CD4-positive, alpha-beta T cell (primary cell): ENCODE measurements at regions of chr18 and their contacts with region 1.

Region 1: GRCh38 chr18:3593904-3594661 is 144.1 kb downstream of the TGIF1 start:
- DNase-seq: peak; percentile 79 to 97 (median 88)
- ATAC-seq: peak; percentile 74
- H3K4me3 ChIP-seq: peak overlapping the region; percentile 59
- H3K4me3 Mint-ChIP-seq: peak overlapping the region; percentile 94
- H3K27ac ChIP-seq: peak overlapping the region; percentile 89 to 98
- H3K27ac Mint-ChIP-seq: peak overlapping the region; percentile 100
- H3K4me1 ChIP-seq: peaks cover 62% of the 10 kb centered on the region
- H3K4me1 Mint-ChIP-seq: peaks cover 59% of the 10 kb centered on the region
- H3K27me3 ChIP-seq: no peaks in the 10 kb centered on the region
- H3K27me3 Mint-ChIP-seq: no peaks in the 10 kb centered on the region
- CTCF ChIP-seq: peak; percentile 82

Region 2: GRCh38 chr18:3261371-3262246 is 332.5 kb before region 1 on chr18 and contains the start of gene MYL12B:
- CTCF ChIA-PET with region 1: interaction called, 6 read pairs
- POLR2A ChIA-PET with region 1: interaction called, 32 read pairs
- intact Hi-C with region 1: no loop called
- DNase-seq: peak; percentile 63 to 92 (median 75)
- ATAC-seq: peak; percentile 71
- H3K4me3 ChIP-seq: peak within 1 kb of the TSS; percentile 68
- H3K4me3 Mint-ChIP-seq: peak within 1 kb of the TSS; percentile 100
- H3K27ac ChIP-seq: peak within 1 kb of the TSS; percentile 95 to 98
- H3K27ac Mint-ChIP-seq: peak within 1 kb of the TSS; percentile 100
- H3K4me1 ChIP-seq: peaks cover 43% of the 10 kb centered on the region
- H3K4me1 Mint-ChIP-seq: peaks cover 85% of the 10 kb centered on the region
- H3K27me3 ChIP-seq: no peaks in the 10 kb centered on the region
- H3K27me3 Mint-ChIP-seq: no peaks in the 10 kb centered on the region
- CTCF ChIP-seq: no peak
- total RNA-seq, gene MYL12B: 128 to 133 TPM

Region 3: DNA sequence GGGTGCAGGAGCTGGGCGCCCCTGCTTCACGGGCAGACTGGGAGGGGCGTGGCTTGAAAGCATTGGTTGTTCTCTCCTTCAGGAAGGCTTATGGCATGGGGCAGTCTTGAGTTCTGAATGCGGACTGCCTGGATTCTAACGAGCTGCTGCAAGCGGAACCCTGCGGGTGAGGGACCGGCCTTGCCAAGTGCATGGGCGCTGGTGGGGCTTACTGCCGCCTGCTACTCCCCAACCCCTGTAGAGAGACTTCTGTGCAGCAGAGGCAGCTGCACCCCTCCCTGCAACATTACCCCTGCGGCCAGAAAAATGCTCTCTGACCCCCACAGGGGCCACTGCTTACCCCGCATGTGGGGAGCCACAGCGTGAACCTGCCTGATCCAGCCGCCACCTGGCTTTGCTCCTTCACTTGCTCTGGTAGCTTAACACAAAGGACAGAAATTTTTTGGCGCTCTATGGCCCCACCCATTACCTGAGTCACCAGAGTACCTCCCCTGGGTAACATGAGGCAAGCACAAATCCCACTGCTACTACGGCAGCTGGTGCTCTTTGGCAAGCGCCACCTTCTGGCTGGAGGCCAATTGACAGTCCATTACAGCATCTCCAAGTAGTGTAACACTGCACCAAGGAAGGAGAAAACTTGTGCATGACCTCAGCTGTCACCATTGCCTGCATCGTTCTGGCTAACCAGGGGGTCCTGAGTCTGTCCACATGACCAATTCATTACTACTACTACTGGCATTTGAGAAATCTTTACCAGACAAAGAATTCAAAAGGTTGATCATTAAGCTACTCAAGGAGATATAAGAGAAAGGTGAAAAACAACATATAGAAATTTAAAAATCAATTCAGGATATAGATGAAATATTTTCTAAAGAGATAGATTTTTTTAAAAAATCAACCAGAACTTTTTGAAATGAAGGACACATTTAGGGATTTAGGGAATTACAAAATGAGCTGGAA is 296.8 kb before region 1 on chr18:
- CTCF ChIA-PET with region 1: interaction called, 30 read pairs
- POLR2A ChIA-PET with region 1: interaction called, 35 read pairs
- intact Hi-C with region 1: loop called (anchors 1 to 2 kb)
- DNase-seq: peak; percentile 88 to 96 (median 92)
- ATAC-seq: peak; percentile 96
- H3K4me3 ChIP-seq: peak overlapping the region; percentile 65
- H3K4me3 Mint-ChIP-seq: peak overlapping the region; percentile 91
- H3K27ac ChIP-seq: no peak overlapping the region
- H3K27ac Mint-ChIP-seq: peak overlapping the region; percentile 79
- H3K4me1 ChIP-seq: peaks cover 11% of the 10 kb centered on the region
- H3K4me1 Mint-ChIP-seq: peaks cover 11% of the 10 kb centered on the region
- H3K27me3 ChIP-seq: peaks cover 0 to 15% of the 10 kb centered on the region in 2 experiments
- H3K27me3 Mint-ChIP-seq: peaks cover 35% of the 10 kb centered on the region
- CTCF ChIP-seq: peak; percentile 80

Region 4: GRCh38 chr18:3360211-3360610 is 233.9 kb before region 1 on chr18:
- CTCF ChIA-PET with region 1: no interaction called
- POLR2A ChIA-PET with region 1: no interaction called
- intact Hi-C with region 1: no loop called
- DNase-seq: no peak
- ATAC-seq: no peak
- H3K4me3 ChIP-seq: no peak overlapping the region
- H3K4me3 Mint-ChIP-seq: no peak overlapping the region
- H3K27ac ChIP-seq: no peak overlapping the region
- H3K27ac Mint-ChIP-seq: no peak overlapping the region
- H3K4me1 ChIP-seq: no peaks in the 10 kb centered on the region
- H3K4me1 Mint-ChIP-seq: peaks cover 10% of the 10 kb centered on the region
- H3K27me3 ChIP-seq: no peaks in the 10 kb centered on the region
- H3K27me3 Mint-ChIP-seq: no peaks in the 10 kb centered on the region
- CTCF ChIP-seq: no peak

Region 5: GRCh38 chr18:3454365-3455089 is 139.6 kb before region 1 on chr18:
- CTCF ChIA-PET with region 1: interaction called, 51 read pairs
- POLR2A ChIA-PET with region 1: interaction called, 140 read pairs
- intact Hi-C with region 1: loop called (anchors 1 to 2 kb)
- DNase-seq: peak in 7 of 14 experiments; percentile 13 to 78 (median 58)
- ATAC-seq: no peak
- H3K4me3 ChIP-seq: peak overlapping the region; percentile 90
- H3K4me3 Mint-ChIP-seq: peak overlapping the region; percentile 98
- H3K27ac ChIP-seq: peak overlapping the region; percentile 75 to 98
- H3K27ac Mint-ChIP-seq: peak overlapping the region; percentile 99
- H3K4me1 ChIP-seq: peaks cover 50% of the 10 kb centered on the region
- H3K4me1 Mint-ChIP-seq: peaks cover 73% of the 10 kb centered on the region
- H3K27me3 ChIP-seq: no peaks in the 10 kb centered on the region
- H3K27me3 Mint-ChIP-seq: no peaks in the 10 kb centered on the region
- CTCF ChIP-seq: peak; percentile 91

Region 6: DNA sequence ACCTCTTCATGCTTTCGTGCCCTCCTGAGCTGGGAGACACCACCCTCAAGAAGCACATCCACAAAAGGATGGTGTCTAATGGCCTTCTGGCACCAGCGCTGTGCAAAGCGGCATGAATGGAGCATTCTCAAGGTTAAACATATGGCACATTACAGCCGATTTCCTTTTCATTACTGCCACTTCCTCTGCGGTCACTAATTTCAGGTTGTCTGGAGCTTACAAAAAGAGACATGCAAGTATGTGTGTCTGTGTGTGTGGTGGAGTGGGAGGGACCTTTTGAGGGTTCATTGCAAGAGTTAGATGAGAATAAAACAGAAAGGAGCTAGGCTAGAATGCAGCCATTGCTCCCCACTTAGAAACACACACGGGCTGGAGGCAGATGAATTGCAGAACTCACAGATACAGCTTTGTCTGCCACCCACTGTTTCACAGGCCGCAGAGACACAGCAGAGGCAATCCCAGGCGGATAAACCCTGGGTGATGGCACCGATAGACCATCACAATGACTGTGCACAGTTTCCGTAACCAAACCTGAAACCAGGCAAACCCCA is 68.1 kb before region 1 on chr18:
- CTCF ChIA-PET with region 1: interaction called, 6 read pairs
- POLR2A ChIA-PET with region 1: interaction called, 12 read pairs
- intact Hi-C with region 1: loop called in 1 of 2 experiments (anchors 10 kb)
- DNase-seq: peak in 9 of 14 experiments; percentile 0 to 76 (median 18)
- ATAC-seq: peak; percentile 74
- H3K4me3 ChIP-seq: peak overlapping the region; percentile 34
- H3K4me3 Mint-ChIP-seq: peak overlapping the region; percentile 17
- H3K27ac ChIP-seq: no peak overlapping the region
- H3K27ac Mint-ChIP-seq: peak overlapping the region; percentile 35
- H3K4me1 ChIP-seq: peaks cover 14% of the 10 kb centered on the region
- H3K4me1 Mint-ChIP-seq: peaks cover 15% of the 10 kb centered on the region
- H3K27me3 ChIP-seq: no peaks in the 10 kb centered on the region
- H3K27me3 Mint-ChIP-seq: no peaks in the 10 kb centered on the region
- CTCF ChIP-seq: no peak

Region 7: DNA sequence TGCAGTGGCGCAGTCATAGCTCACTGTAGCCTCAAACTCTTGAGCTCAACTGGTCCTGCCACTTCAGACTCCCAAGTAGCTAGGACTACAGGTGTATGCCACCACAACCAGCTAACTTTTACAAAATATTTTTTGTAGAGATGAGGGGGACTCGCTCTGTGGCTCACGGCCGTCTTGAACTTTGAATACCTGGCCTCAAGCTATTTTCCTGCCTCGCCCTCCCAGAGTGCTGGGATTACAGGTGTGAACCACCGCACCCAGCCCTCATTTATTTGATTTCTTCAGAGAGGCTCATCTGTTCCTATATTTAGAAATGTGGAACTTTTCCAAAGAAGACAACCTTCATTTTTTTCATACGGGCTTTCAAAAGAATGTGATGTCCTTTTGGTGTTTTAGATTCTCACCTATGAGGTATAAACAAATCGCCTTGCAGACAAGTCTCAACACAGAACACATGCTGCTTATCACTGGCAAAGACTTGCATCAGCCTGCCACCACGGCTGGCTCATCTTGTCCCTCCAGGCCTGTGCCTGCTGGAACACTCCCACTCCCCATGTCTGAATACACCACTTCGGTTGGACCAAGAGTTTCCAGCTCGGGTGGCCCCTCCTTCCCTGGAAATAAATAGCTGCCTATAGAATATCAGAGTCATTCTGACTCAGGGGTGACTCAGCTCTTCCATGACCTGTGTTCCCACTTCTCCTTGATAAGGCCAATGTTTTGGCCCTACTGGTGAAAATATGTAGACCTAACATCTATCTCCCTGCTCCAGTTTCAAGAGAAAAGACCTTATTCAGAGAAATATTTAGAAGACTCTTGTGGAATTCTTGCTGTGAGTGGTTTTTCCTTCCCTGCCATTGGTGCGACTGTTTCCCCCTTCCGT is 58.5 kb after region 1 on chr18:
- CTCF ChIA-PET with region 1: no interaction called
- POLR2A ChIA-PET with region 1: no interaction called
- intact Hi-C with region 1: no loop called
- DNase-seq: peak in 2 of 14 experiments; percentile 33 to 53
- ATAC-seq: no peak
- H3K4me3 ChIP-seq: no peak overlapping the region
- H3K4me3 Mint-ChIP-seq: no peak overlapping the region
- H3K27ac ChIP-seq: no peak overlapping the region
- H3K27ac Mint-ChIP-seq: no peak overlapping the region
- H3K4me1 ChIP-seq: no peaks in the 10 kb centered on the region
- H3K4me1 Mint-ChIP-seq: no peaks in the 10 kb centered on the region
- H3K27me3 ChIP-seq: no peaks in the 10 kb centered on the region
- H3K27me3 Mint-ChIP-seq: no peaks in the 10 kb centered on the region
- CTCF ChIP-seq: no peak

Region 8: GRCh38 chr18:3665780-3666525 is 71.9 kb after region 1 on chr18:
- CTCF ChIA-PET with region 1: interaction called, 26 read pairs
- POLR2A ChIA-PET with region 1: interaction called, 31 read pairs
- intact Hi-C with region 1: loop called (anchors 5 kb)
- DNase-seq: peak; percentile 48 to 86 (median 70)
- ATAC-seq: peak; percentile 88
- H3K4me3 ChIP-seq: peak overlapping the region; percentile 19
- H3K4me3 Mint-ChIP-seq: no peak overlapping the region
- H3K27ac ChIP-seq: no peak overlapping the region
- H3K27ac Mint-ChIP-seq: no peak overlapping the region
- H3K4me1 ChIP-seq: peaks cover 7% of the 10 kb centered on the region
- H3K4me1 Mint-ChIP-seq: peaks cover 7% of the 10 kb centered on the region
- H3K27me3 ChIP-seq: no peaks in the 10 kb centered on the region
- H3K27me3 Mint-ChIP-seq: no peaks in the 10 kb centered on the region
- CTCF ChIP-seq: peak; percentile 94